Body of pancreas (tissue), 4 donors: ENCODE measurements at regions of chr2 and their contacts with region 1.

Region 1: DNA sequence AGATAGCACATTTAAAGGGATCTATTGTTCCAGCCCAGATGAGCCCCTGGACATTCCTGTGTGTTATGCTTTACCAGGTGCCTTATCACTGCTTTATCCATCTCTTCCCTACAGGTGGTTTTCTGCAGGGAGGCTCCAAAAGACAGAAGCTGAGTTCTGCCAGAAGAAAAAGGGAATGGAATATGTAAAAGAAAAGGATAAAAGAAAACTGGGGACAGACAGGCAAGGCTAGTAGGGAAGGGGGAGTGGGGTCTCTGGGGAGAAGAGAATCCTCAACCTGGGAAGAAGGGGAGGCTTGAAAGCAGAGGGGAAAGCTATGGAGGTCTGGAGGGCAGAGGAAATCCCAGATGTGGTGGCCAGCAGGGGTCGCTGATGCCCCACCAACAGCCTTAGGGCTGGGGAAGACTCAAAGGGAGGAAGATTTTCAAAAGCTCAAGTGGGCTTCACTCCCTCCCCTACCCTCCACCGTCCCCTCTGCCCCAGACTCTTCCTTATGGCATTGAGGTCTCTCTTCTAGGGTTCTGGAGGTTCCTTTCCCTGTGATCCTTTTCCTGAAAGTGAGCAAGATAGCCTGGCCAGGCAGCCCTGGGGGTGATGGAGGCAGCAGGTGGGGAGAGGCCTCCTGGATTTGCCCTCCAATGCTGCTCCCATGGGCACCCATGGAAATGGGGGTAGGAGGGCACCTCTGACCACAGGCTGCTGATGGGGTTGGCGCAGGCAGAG is 178.1 kb upstream of the PKDCC start:
- DNase-seq: peak; percentile 64 to 80 (median 76)
- ATAC-seq: peak; percentile 84
- H3K4me3 ChIP-seq: no peak overlapping the region
- H3K27ac ChIP-seq: no peak overlapping the region
- H3K4me1 ChIP-seq: no peaks in the 10 kb centered on the region
- H3K27me3 ChIP-seq: no peaks in the 10 kb centered on the region
- CTCF ChIP-seq: peak; percentile 65 to 94 (median 84)
- POLR2A ChIP-seq: no peak

Region 2: GRCh38 chr2:42010810-42011209 is 141.1 kb after region 1 on chr2:
- intact Hi-C with region 1: no loop called
- DNase-seq: peak in 1 of 4 donors; percentile 11
- ATAC-seq: peak; percentile 30
- H3K4me3 ChIP-seq: no peak overlapping the region
- H3K27ac ChIP-seq: no peak overlapping the region
- H3K4me1 ChIP-seq: no peaks in the 10 kb centered on the region
- H3K27me3 ChIP-seq: no peaks in the 10 kb centered on the region
- CTCF ChIP-seq: no peak
- POLR2A ChIP-seq: no peak

Region 3: GRCh38 chr2:42086500-42086953 is 216.8 kb after region 1 on chr2:
- intact Hi-C with region 1: loop called (anchors 2 kb)
- DNase-seq: peak; percentile 57 to 66 (median 62)
- ATAC-seq: peak; percentile 85
- H3K4me3 ChIP-seq: no peak overlapping the region
- H3K27ac ChIP-seq: no peak overlapping the region
- H3K4me1 ChIP-seq: peaks cover 11% of the 10 kb centered on the region
- H3K27me3 ChIP-seq: no peaks in the 10 kb centered on the region
- CTCF ChIP-seq: peak; percentile 57 to 93 (median 87)
- POLR2A ChIP-seq: no peak